ENCODE measurements at regions of chr11 and their contacts with region 1.

Region 1: DNA sequence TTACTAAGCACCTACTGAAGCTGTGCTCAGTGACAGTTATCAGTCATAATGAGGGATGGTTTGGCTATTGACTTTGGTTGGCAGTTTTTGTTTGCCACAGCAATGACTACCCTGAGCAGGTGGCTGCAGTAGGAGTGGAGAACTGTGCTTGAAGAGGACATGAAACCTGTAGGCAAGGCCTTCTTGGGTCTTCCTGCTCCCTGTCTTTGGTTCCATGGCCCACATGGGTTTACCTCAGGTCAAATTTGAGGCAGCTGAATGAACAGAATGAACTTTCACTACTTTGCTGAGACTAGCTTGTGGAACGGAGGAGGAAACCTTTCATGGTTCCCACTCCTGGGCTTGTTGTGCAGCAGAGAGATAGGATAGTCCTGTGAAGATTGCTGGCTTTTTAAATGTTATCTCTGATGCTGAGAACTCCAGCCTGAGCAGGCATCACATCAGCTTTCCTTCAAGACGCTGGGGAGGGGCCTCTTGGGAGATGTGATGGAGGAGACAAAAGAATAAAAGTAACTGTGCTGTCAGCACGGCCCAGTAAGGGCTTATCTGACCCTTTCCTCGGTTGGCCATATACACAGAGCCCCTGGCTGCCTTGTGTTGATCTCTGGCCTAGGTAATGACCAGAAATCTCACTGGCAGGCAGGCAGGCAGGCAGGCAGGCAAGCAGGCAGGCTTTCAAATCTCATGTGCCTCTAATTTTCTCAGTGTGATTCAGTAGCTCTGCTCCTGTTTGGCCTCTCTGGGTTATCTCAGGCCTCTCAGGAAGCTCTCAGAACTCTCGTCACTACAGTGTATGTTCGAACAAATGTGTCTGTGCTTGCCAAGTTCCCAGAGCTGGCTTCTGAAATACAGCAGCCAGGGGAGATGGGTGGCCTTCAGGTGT is 12.0 kb downstream of the STIM1 start:
- DNase-seq: peak; percentile 66
- ATAC-seq: peak; percentile 57
- H3K4me3 ChIP-seq: peak overlapping the region; percentile 28; the same call in 1 of the 2 replicates
- H3K27ac ChIP-seq: peak overlapping the region; percentile 82
- H3K4me1 ChIP-seq: peaks cover 65% of the 10 kb centered on the region
- H3K27me3 ChIP-seq: no peaks in the 10 kb centered on the region
- CTCF ChIP-seq: no peak
- EP300 ChIP-seq: no peak
- POLR2A ChIP-seq: no peak
- RAD21 ChIP-seq: no peak

Region 2: GRCh38 chr11:3755151-3755550 is 112.3 kb before region 1 on chr11:
- CTCF ChIA-PET with region 1: no interaction called
- POLR2A ChIA-PET with region 1: no interaction called
- RAD21 ChIA-PET with region 1: no interaction called
- SMC1A ChIA-PET with region 1: no interaction called
- in situ Hi-C with region 1: no loop called
- intact Hi-C with region 1: no loop called
- DNase-seq: no peak
- ATAC-seq: no peak
- H3K4me3 ChIP-seq: no peak overlapping the region
- H3K27ac ChIP-seq: no peak overlapping the region
- H3K4me1 ChIP-seq: no peaks in the 10 kb centered on the region
- H3K27me3 ChIP-seq: no peaks in the 10 kb centered on the region
- CTCF ChIP-seq: no peak
- EP300 ChIP-seq: no peak
- POLR2A ChIP-seq: no peak
- RAD21 ChIP-seq: no peak

Region 3: DNA sequence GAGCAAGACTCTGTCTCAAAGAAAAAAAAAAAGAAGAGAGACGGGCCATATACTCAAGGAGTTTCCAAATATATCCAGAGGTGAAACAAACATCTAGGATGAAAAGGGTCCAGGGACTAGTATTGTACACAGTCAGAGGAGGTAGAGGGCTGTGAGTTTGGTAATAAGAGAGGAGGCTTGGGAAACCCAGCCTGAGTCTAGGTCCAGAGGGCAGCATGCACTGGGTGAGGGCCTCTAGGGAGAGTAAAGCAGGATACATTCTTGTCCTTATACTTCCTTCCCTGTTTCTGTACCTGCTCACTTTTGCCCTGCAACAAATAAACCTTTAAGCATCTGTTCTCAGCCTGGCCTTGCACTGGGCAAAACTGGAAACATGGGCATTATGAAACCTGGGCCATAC is 19.5 kb after region 1 on chr11:
- CTCF ChIA-PET with region 1: interaction called, 1,047 read pairs
- POLR2A ChIA-PET with region 1: interaction called, 405 read pairs
- RAD21 ChIA-PET with region 1: interaction called, 7 read pairs
- SMC1A ChIA-PET with region 1: interaction called, 633 read pairs
- in situ Hi-C with region 1: no loop called
- intact Hi-C with region 1: no loop called
- DNase-seq: no peak
- ATAC-seq: no peak
- H3K4me3 ChIP-seq: no peak overlapping the region
- H3K27ac ChIP-seq: no peak overlapping the region
- H3K4me1 ChIP-seq: peaks cover 28% of the 10 kb centered on the region
- H3K27me3 ChIP-seq: no peaks in the 10 kb centered on the region
- CTCF ChIP-seq: no peak
- EP300 ChIP-seq: no peak
- POLR2A ChIP-seq: no peak
- RAD21 ChIP-seq: no peak